Activated CD4-positive, alpha-beta memory T cell treated with anti-CD3 and anti-CD28 coated beads for 36 hours (primary cell): ENCODE measurements at regions of chr1 and their contacts with region 1.

Region 1: DNA sequence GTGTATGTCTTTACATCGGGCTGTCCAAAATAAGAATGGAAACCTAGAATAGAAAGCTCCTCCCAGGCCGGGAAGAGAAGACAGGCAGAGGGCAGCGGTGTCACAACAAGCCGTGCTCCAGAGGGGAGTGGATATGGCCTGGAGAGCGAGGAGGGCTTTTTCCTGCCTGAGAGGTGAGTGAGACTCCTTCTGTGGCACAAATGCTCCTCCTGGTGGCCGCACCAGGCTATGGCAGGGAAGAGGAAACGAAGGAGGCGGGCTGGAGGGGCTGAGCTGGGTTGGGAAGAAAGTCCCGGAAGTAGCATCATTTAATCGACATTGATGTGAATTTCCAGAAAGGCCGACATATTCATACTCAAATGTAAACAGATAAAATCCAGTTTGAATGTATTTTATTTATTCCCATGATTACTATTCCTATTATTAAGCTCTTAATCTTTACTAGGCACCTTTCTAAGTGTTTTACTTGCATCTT is 54.7 kb downstream of the MEF2D start:
- DNase-seq: peak; percentile 90
- H3K4me3 Mint-ChIP-seq: no peak overlapping the region
- H3K27ac Mint-ChIP-seq: no peak overlapping the region
- H3K4me1 Mint-ChIP-seq: peaks cover 16% of the 10 kb centered on the region
- H3K27me3 Mint-ChIP-seq: peaks cover 47% of the 10 kb centered on the region

Region 2: DNA sequence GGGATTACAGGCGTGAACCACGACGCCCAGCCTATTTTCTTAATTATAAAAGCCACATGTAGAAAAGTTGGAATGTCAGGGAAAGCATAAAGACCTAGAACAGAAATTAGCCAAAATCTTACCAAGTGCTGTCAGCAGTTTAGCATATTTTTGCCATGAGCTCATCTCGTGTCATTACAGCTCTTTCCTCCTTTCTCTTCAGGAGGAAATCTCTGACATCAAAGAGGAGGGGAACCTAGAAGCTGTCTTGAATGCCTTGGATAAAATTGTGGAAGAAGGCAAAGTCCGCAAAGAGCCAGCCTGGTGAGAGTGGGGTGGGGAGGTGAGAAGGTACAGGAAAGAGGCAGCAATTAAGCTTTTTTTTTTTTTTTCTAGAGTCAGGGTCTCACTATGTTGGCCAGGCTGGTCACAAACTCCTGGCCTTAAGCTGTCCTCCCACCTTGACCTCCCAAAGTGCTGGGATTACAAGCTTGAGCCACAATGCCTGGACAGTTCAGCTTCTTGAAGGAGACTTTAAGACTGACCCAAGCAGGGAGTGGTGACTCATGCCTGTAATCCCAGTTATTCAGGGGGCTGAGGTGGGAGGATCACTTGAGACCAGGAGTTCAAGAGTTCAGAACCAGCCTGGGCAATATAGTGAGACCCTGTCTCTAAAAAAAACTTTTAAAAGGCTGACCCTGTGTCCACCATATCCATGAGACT is 212.2 kb before region 1 on chr1:
- CTCF ChIA-PET with region 1: no interaction called
- POLR2A ChIA-PET with region 1: no interaction called
- intact Hi-C with region 1: no loop called
- DNase-seq: no peak
- H3K4me3 Mint-ChIP-seq: no peak overlapping the region
- H3K27ac Mint-ChIP-seq: no peak overlapping the region
- H3K4me1 Mint-ChIP-seq: peaks cover 6% of the 10 kb centered on the region
- H3K27me3 Mint-ChIP-seq: no peaks in the 10 kb centered on the region

Region 3: DNA sequence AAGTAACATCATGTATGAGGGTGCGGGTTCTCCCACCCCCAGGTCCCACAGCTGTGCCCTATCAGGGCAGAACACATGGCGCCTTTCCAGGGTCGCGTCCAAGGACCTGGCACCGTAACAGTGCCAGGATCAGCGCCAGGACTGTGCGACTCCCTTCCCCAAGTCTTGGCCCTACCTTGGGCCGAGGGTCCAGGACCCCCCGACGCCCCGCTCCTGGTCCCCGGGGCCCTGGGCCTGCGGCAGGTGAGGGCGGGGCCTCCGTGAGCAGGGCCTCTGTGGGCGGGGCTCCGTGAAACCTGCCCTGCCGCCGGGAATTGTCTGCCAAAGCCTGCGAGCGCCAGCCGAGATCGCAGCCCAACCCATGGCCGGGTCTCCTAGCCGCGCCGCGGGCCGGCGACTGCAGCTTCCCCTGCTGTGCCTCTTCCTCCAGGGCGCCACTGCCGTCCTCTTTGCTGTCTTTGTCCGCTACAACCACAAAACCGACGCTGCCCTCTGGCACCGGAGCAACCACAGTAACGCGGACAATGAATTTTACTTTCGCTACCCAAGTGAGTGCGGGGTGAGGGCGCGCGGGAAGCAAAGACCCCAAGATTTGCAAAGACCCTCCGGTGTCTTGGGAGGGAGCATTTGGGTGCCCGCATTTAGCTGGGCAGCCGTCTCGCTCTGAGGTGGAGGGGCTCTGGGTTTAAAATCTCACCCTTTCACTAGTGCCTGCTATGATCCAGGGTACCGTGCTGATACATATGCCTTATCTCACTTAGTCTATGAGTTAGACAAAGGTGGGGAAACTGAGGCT is 76.7 kb before region 1 on chr1 and contains the start of gene RHBG:
- CTCF ChIA-PET with region 1: interaction called, 12 read pairs
- POLR2A ChIA-PET with region 1: no interaction called
- intact Hi-C with region 1: no loop called
- DNase-seq: peak; percentile 24
- H3K4me3 Mint-ChIP-seq: no peak within 1 kb of the TSS
- H3K27ac Mint-ChIP-seq: no peak within 1 kb of the TSS
- H3K4me1 Mint-ChIP-seq: peaks cover 2% of the 10 kb centered on the region
- H3K27me3 Mint-ChIP-seq: peaks cover 31% of the 10 kb centered on the region
- total RNA-seq, gene RHBG: not detected

Region 4: DNA sequence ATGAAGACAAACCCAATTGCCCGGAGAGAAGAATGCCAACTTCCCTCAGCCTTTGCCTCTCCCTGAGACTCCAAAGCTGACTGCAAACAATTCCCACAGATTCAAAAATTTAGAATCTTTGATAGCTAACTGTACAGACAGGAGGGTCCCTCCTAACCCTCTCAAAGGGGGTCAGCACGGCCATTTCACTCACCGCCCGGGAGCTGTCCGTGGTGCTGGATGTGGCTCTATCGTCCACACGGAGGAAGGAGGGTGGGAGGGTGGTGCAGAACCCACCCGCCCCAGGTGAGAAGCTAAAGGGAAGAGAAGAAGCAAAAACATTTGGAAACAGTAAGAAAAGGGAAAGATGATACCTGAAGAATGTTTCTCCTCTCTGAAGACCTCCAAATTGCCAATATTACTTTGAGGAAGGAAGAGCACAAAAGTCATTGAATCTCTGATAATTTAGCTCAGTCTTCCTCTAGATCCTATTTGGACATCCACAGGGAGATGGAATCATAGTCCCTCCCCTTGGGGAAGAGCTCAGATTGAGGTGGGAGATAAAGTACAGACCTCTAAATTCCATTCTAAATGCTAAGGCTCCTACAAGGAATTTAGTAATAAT is 31.3 kb before region 1 on chr1:
- CTCF ChIA-PET with region 1: interaction called, 24 read pairs
- POLR2A ChIA-PET with region 1: no interaction called
- intact Hi-C with region 1: no loop called
- DNase-seq: peak; percentile 38
- H3K4me3 Mint-ChIP-seq: no peak overlapping the region
- H3K27ac Mint-ChIP-seq: no peak overlapping the region
- H3K4me1 Mint-ChIP-seq: peaks cover under 1% of the 10 kb centered on the region
- H3K27me3 Mint-ChIP-seq: peaks cover 21% of the 10 kb centered on the region

Region 5: GRCh38 chr1:156435545-156436141 is 10.2 kb before region 1 on chr1:
- CTCF ChIA-PET with region 1: interaction called, 26 read pairs
- POLR2A ChIA-PET with region 1: no interaction called
- intact Hi-C with region 1: no loop called
- DNase-seq: peak; percentile 32
- H3K4me3 Mint-ChIP-seq: peak overlapping the region; percentile 46
- H3K27ac Mint-ChIP-seq: no peak overlapping the region
- H3K4me1 Mint-ChIP-seq: peaks cover 38% of the 10 kb centered on the region
- H3K27me3 Mint-ChIP-seq: peaks cover 79% of the 10 kb centered on the region

Region 6: DNA sequence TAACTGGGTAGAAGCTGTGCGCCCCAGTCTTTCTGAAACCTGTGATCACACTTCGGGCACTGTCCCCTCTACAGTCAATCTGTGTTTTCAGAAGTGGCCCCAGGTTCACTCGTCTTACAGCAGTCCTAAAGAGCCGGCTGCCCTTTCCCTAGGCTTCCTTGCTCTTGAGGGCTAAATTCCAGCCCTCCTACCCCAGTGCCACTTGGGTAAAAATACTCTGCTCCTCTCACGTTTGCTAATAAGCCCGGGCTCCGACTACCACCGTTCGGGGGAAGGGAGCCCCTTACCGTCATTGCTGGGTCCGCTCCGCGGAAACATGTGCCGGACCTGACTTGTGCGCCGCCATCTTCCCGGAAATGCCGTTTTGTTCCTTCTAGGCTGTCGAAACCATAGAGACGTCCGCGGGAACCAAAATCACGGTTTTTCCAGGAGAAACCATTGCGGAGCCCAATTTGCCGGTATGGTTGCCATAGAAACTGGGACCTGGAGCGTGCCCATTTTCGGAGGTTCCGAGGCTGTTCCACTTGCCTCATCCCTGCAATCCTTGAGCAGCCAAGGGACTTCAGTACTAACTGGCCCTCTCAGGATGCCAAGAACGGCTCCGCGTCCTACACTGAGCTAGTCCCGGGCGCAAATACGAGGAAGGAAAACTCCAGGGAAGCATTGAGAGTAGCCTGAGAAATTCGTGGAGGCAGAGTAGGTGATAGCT is 155.4 kb after region 1 on chr1 and contains the start of gene GPATCH4:
- CTCF ChIA-PET with region 1: interaction called, 16 read pairs
- POLR2A ChIA-PET with region 1: no interaction called
- intact Hi-C with region 1: no loop called
- DNase-seq: peak; percentile 88
- H3K4me3 Mint-ChIP-seq: peak within 1 kb of the TSS; percentile 94
- H3K27ac Mint-ChIP-seq: peak within 1 kb of the TSS; percentile 95
- H3K4me1 Mint-ChIP-seq: peaks cover 38% of the 10 kb centered on the region
- H3K27me3 Mint-ChIP-seq: no peaks in the 10 kb centered on the region
- total RNA-seq, gene GPATCH4: 40.2 to 43.2 TPM